ENCODE measurements at regions of chr12 and their contacts with region 1.

Region 1: DNA sequence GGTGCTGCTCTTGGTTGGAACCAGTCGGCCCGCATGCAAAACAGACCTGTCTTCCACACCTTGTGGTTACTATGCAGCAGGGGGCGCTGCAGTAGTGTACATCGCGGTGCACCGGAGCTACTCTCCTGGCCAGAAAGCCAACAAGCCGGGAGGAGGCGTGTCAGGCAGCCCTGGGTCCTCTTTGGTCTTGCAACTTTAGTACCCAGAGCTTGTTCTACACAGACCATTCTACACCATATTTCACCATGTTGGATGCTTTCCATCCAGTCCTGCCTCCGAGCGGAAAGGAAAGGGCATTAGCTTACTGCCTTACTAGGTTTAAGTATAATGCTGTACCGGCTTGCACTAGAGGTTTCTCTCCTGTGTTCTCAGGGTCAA is 927 bp upstream of the TMTC2 start:
- DNase-seq: peak; percentile 73
- ATAC-seq: peak; percentile 77
- H3K4me3 ChIP-seq: peak overlapping the region; percentile 75
- H3K27ac ChIP-seq: peak overlapping the region; percentile 94
- H3K4me1 ChIP-seq: peaks cover 5% of the 10 kb centered on the region
- H3K27me3 ChIP-seq: no peaks in the 10 kb centered on the region
- CTCF ChIP-seq: peak; percentile 83 to 98 (median 89); a peak in 5 of 6 replicates
- EP300 ChIP-seq: no peak
- POLR2A ChIP-seq: no peak
- RAD21 ChIP-seq: peak; percentile 95

Region 2: DNA sequence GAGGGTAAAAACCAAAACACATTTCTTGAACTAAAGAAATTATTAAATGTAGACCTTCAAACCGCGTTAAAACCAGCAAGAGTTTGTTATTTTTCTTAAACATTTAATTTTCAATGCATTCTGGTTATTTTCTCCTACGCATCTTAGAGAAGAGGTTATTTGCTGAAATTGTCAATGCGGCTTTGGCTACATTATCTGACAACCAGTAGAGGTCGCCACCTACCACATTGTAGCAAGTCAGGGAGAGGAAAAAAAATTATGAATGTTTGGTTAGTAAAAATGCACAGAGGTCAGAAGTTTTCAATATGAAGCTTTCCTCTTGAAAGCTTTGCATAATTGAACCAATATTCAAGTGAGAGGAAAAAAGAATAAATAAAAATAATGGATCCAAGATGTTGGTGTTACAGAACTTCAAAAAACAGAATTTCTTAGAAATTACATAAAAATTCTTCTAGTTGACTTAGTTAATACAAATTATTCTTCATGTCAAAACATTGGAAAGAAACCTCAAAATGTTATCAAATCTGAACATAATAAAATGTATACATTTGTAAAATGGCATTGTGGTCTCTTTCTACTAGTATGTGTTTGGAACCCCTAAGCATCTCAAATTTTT is 158.5 kb before region 1 on chr12:
- CTCF ChIA-PET with region 1: interaction called, 22 read pairs
- POLR2A ChIA-PET with region 1: interaction called, 3 read pairs
- RAD21 ChIA-PET with region 1: interaction called, 20 read pairs
- SMC1A ChIA-PET with region 1: interaction called, 22 read pairs
- in situ Hi-C with region 1: no loop called
- intact Hi-C with region 1: loop called (anchors 1 kb)
- DNase-seq: no peak
- ATAC-seq: peak; percentile 80
- H3K4me3 ChIP-seq: no peak overlapping the region
- H3K27ac ChIP-seq: no peak overlapping the region
- H3K4me1 ChIP-seq: no peaks in the 10 kb centered on the region
- H3K27me3 ChIP-seq: no peaks in the 10 kb centered on the region
- CTCF ChIP-seq: peak; percentile 83 to 92 (median 84)
- EP300 ChIP-seq: no peak
- POLR2A ChIP-seq: no peak
- RAD21 ChIP-seq: peak; percentile 97

Region 3: GRCh38 chr12:82665142-82665923 is 20.4 kb before region 1 on chr12:
- CTCF ChIA-PET with region 1: interaction called, 14 read pairs
- POLR2A ChIA-PET with region 1: no interaction called
- RAD21 ChIA-PET with region 1: interaction called, 4 read pairs
- SMC1A ChIA-PET with region 1: no interaction called
- in situ Hi-C with region 1: no loop called
- intact Hi-C with region 1: no loop called
- DNase-seq: no peak
- ATAC-seq: no peak
- H3K4me3 ChIP-seq: no peak overlapping the region
- H3K27ac ChIP-seq: no peak overlapping the region
- H3K4me1 ChIP-seq: no peaks in the 10 kb centered on the region
- H3K27me3 ChIP-seq: no peaks in the 10 kb centered on the region
- CTCF ChIP-seq: no peak
- EP300 ChIP-seq: no peak
- POLR2A ChIP-seq: no peak
- RAD21 ChIP-seq: no peak

Region 4: GRCh38 chr12:82807132-82807737 is 121.5 kb after region 1 on chr12:
- CTCF ChIA-PET with region 1: interaction called, 4 read pairs
- POLR2A ChIA-PET with region 1: no interaction called
- RAD21 ChIA-PET with region 1: interaction called, 5 read pairs
- SMC1A ChIA-PET with region 1: interaction called, 10 read pairs
- in situ Hi-C with region 1: no loop called
- intact Hi-C with region 1: no loop called
- DNase-seq: no peak
- ATAC-seq: no peak; the same call in 2 of the 3 replicates
- H3K4me3 ChIP-seq: no peak overlapping the region
- H3K27ac ChIP-seq: no peak overlapping the region
- H3K4me1 ChIP-seq: no peaks in the 10 kb centered on the region
- H3K27me3 ChIP-seq: no peaks in the 10 kb centered on the region
- CTCF ChIP-seq: no peak
- EP300 ChIP-seq: no peak
- POLR2A ChIP-seq: no peak
- RAD21 ChIP-seq: no peak

Region 5: DNA sequence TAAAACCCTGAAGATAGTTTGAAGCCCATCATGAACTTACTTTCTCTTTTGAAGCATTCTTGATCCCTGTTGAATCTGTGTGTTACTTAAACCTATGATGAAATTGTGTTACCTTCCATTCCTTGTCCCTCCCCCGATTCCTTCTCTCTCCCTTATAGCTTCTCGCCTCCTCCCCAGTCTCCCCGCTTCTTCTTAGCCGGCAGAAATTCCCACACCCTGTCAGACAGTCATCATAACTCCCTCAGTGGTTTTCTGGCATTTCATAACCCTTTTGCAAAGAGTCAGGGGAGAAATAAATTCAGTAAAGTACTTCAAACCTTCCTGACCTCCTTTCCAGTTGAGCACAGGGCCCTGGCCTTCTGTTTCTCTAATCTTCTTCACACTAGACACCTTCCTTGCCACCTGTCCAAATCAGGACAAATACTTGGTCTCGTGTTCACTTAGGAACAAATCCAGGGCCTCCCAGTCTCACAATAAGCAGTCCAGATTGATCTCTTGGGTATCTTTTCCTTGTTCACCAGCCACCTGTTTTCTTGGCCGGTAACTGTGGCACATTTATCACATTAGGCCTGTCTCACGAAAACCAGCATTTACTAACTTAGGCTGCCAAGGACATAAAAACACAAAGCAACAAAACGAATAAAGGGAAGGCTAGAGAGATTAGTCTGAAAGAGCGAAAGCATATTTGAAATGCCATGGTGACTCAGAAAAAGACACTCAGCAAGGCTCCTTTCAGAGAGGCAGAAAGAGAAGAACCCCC is 356.8 kb after region 1 on chr12:
- CTCF ChIA-PET with region 1: no interaction called
- POLR2A ChIA-PET with region 1: no interaction called
- RAD21 ChIA-PET with region 1: interaction called, 3 read pairs
- SMC1A ChIA-PET with region 1: no interaction called
- in situ Hi-C with region 1: no loop called
- intact Hi-C with region 1: loop called (anchors 5 kb)
- DNase-seq: no peak
- ATAC-seq: no peak
- H3K4me3 ChIP-seq: no peak overlapping the region
- H3K27ac ChIP-seq: no peak overlapping the region
- H3K4me1 ChIP-seq: no peaks in the 10 kb centered on the region
- H3K27me3 ChIP-seq: no peaks in the 10 kb centered on the region
- CTCF ChIP-seq: no peak
- EP300 ChIP-seq: no peak
- POLR2A ChIP-seq: no peak
- RAD21 ChIP-seq: no peak

Region 6: DNA sequence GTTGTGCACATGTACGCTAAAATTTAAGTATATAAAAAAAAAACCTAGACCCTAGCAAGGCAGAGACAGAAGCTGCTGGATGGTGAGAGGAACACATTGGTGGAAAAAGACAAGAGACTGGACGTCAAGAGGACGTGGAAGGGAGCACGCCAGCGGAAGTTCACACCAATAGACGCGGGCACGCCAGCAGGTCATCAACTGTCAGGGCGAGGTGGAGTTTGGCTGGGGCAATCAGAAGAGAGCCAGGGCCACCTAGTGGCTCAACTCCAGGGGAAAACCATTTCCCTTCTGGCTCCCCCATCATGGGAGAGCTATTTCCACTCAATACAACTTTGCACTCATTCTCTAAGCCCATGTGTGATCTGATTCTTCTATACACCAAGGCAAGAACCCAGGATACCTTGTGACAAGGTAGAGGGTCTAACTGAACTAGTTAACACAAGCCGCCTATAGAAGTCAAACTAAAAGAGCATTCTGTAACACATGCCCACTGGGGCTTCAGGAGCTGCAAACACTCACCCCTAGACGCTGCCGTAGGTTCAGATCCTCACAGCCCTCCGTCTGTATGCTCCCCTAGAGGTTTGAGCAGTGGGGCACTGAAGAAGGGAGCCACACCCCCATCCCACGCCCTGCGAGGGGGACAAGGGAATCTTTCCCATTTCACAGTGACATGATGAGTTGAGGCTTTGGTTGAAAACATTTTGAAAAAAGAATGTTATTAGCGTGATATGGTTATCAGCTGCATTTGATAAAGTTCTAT is 703.6 kb after region 1 on chr12:
- CTCF ChIA-PET with region 1: interaction called, 38 read pairs
- POLR2A ChIA-PET with region 1: interaction called, 3 read pairs
- RAD21 ChIA-PET with region 1: interaction called, 29 read pairs
- SMC1A ChIA-PET with region 1: interaction called, 17 read pairs
- in situ Hi-C with region 1: no loop called
- intact Hi-C with region 1: loop called (anchors 1 kb)
- DNase-seq: no peak
- ATAC-seq: peak; percentile 69
- H3K4me3 ChIP-seq: no peak overlapping the region
- H3K27ac ChIP-seq: no peak overlapping the region
- H3K4me1 ChIP-seq: no peaks in the 10 kb centered on the region
- H3K27me3 ChIP-seq: no peaks in the 10 kb centered on the region
- CTCF ChIP-seq: peak; percentile 6 to 32 (median 16); a peak in 3 of 6 replicates
- EP300 ChIP-seq: no peak
- POLR2A ChIP-seq: no peak
- RAD21 ChIP-seq: no peak

Region 7: GRCh38 chr12:83954939-83955601 is 1269.3 kb after region 1 on chr12:
- CTCF ChIA-PET with region 1: interaction called, 3 read pairs
- POLR2A ChIA-PET with region 1: no interaction called
- RAD21 ChIA-PET with region 1: no interaction called
- SMC1A ChIA-PET with region 1: interaction called, 6 read pairs
- in situ Hi-C with region 1: no loop called
- intact Hi-C with region 1: loop called (anchors 10 kb)
- DNase-seq: no peak
- ATAC-seq: peak; percentile 59
- H3K4me3 ChIP-seq: no peak overlapping the region
- H3K27ac ChIP-seq: no peak overlapping the region
- H3K4me1 ChIP-seq: no peaks in the 10 kb centered on the region
- H3K27me3 ChIP-seq: no peaks in the 10 kb centered on the region
- CTCF ChIP-seq: peak in 2 of 3 experiments; percentile 19 to 31; a peak in 2 of 6 replicates
- EP300 ChIP-seq: no peak
- POLR2A ChIP-seq: no peak
- RAD21 ChIP-seq: no peak

Measured in GM12878 (cell line).